ENCODE measurements at regions of chr15 and their contacts with region 1.

Region 1: GRCh38 chr15:36449084-36449661 is 130.3 kb upstream of the CDIN1 start:
- DNase-seq: peak; percentile 66 to 94 (median 76)
- ATAC-seq: peak; percentile 100
- H3K4me3 ChIP-seq: no peak overlapping the region
- H3K27ac ChIP-seq: peak overlapping the region; percentile 74; the same call in 2 of the 3 replicates
- H3K4me1 ChIP-seq: peaks cover 2 to 15% of the 10 kb centered on the region in 2 experiments; a peak in 2 of 5 replicates
- H3K27me3 ChIP-seq: no peaks in the 10 kb centered on the region
- CTCF ChIP-seq: peak; percentile 53 to 68 (median 67); a peak in 5 of 6 replicates
- EP300 ChIP-seq: peak; percentile 78
- POLR2A ChIP-seq: no peak
- RAD21 ChIP-seq: peak; percentile 67 to 84

Region 2: DNA sequence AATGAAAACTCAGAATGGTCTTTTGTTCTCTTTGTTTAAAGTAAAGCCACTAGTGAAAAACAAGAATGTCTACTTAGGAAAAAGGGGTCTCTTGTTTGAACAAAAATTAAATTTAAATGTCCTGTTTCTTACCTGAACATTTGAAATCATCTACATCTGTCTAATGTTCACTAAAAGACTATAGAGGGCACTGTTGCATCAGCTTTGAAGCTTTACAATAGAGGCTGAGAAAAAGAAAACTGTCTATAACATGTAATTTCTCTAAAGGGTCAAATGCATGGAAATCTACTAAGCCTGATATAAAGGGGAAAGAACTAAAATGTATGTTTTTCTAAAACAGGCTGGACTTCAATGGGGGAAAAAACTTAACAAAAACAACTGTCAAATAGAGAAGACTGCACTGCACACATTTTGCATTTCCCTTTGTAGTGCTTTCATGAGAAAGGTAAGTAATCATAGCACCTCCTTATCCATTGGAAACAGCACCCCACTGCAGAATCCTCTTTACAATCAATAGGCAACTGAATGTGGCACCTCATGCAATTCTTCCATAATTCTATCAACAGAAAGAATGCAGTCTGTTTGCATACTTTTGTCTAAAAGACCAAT is 929.5 kb before region 1 on chr15:
- CTCF ChIA-PET with region 1: no interaction called
- POLR2A ChIA-PET with region 1: no interaction called
- in situ Hi-C with region 1: no loop called
- intact Hi-C with region 1: loop called (anchors 10 kb)
- DNase-seq: peak in 3 of 4 experiments; percentile 10 to 61 (median 12)
- ATAC-seq: peak; percentile 86
- H3K4me3 ChIP-seq: no peak overlapping the region
- H3K27ac ChIP-seq: no peak overlapping the region
- H3K4me1 ChIP-seq: no peaks in the 10 kb centered on the region
- H3K27me3 ChIP-seq: no peaks in the 10 kb centered on the region
- CTCF ChIP-seq: peak; percentile 28 to 75 (median 40); a peak in 3 of 6 replicates
- EP300 ChIP-seq: no peak
- POLR2A ChIP-seq: no peak
- RAD21 ChIP-seq: peak; percentile 76 to 90

Region 3: DNA sequence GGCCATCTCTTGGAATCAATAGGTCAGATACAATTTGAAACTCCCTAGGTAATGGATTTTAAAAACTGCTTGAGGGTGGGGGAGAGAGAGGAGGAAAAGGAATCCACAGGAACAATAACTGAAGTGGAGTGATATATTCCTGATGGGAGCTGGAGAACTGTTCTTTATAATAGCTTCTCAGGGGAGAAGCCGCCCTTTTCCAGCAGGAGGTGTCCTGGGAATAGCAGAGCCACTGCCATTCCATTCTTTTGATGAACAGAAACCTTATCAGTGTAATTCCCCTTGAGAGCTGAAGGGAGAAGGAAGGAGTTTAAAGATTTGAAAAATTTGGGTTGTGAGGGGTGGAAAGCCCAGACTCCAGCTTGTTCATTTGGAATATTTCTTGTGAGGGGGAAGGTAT is 398.3 kb before region 1 on chr15:
- CTCF ChIA-PET with region 1: no interaction called
- POLR2A ChIA-PET with region 1: no interaction called
- in situ Hi-C with region 1: no loop called
- intact Hi-C with region 1: loop called (anchors 5 kb)
- DNase-seq: no peak
- ATAC-seq: no peak
- H3K4me3 ChIP-seq: no peak overlapping the region
- H3K27ac ChIP-seq: no peak overlapping the region
- H3K4me1 ChIP-seq: no peaks in the 10 kb centered on the region; a peak in 1 of 5 replicates
- H3K27me3 ChIP-seq: no peaks in the 10 kb centered on the region
- CTCF ChIP-seq: no peak
- EP300 ChIP-seq: no peak
- POLR2A ChIP-seq: no peak
- RAD21 ChIP-seq: no peak

Region 4: GRCh38 chr15:36278219-36278618 is 171.0 kb before region 1 on chr15:
- CTCF ChIA-PET with region 1: no interaction called
- POLR2A ChIA-PET with region 1: no interaction called
- in situ Hi-C with region 1: no loop called
- intact Hi-C with region 1: loop called (anchors 1 kb)
- DNase-seq: peak in 1 of 4 experiments; percentile 29
- ATAC-seq: peak; percentile 58; the same call in 2 of the 3 replicates
- H3K4me3 ChIP-seq: no peak overlapping the region
- H3K27ac ChIP-seq: no peak overlapping the region; the same call in 2 of the 3 replicates
- H3K4me1 ChIP-seq: no peaks in the 10 kb centered on the region
- H3K27me3 ChIP-seq: no peaks in the 10 kb centered on the region
- CTCF ChIP-seq: peak; percentile 32 to 48 (median 32); a peak in 3 of 6 replicates
- EP300 ChIP-seq: no peak
- POLR2A ChIP-seq: no peak
- RAD21 ChIP-seq: peak; percentile 53 to 68

Region 5: GRCh38 chr15:36438499-36438898 is 10.7 kb before region 1 on chr15:
- CTCF ChIA-PET with region 1: no interaction called
- POLR2A ChIA-PET with region 1: interaction called, 15 read pairs
- in situ Hi-C with region 1: no loop called
- intact Hi-C with region 1: no loop called
- DNase-seq: no peak
- ATAC-seq: no peak
- H3K4me3 ChIP-seq: no peak overlapping the region
- H3K27ac ChIP-seq: no peak overlapping the region
- H3K4me1 ChIP-seq: no peaks in the 10 kb centered on the region
- H3K27me3 ChIP-seq: no peaks in the 10 kb centered on the region
- CTCF ChIP-seq: no peak
- EP300 ChIP-seq: no peak
- POLR2A ChIP-seq: no peak
- RAD21 ChIP-seq: no peak